ENCODE measurements at regions of chr4 and their contacts with region 1.

Region 1: DNA sequence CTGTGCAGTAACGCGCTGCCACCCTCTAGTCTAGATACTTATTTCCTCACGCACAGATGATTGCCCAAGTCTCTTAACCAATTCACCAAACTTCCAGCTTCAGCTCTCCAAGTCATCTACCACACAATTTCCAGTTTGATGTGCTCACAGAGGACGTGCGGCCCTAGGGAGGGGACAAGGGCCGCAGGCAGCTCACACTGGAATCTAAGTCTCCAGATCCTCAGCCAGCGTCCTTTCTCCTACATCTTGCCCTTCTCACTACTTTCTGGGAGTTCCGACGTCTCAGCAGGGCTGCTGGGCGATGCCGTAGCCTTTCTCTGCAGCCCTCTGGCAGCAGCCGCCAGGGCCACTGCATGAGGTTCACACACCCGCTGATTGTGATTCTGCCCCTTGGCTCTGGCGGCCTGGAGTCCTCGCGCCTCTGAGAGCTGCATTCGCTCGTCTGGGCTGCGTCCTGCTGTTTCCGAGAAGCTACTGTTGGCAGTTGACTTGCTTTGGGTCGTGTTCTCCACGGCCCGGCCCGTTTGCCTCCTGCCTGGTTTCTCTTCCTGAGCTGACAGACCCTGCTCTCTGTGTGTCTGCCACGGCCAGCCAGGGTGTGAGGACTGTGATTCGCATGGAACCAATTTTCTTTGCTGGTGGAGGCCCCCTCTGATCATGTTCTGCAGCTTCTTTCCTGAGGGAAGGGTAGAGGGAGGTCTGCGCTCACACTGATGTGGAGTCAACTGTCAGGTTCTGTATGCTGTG is 14.1 kb upstream of the TMEM131L start:
- DNase-seq: no peak
- H3K4me3 Mint-ChIP-seq: no peak overlapping the region
- H3K27ac Mint-ChIP-seq: no peak overlapping the region
- H3K4me1 Mint-ChIP-seq: peaks cover 11% of the 10 kb centered on the region
- H3K27me3 Mint-ChIP-seq: no peaks in the 10 kb centered on the region

Region 2: GRCh38 chr4:153159728-153160221 is 292.3 kb before region 1 on chr4:
- intact Hi-C with region 1: no loop called
- DNase-seq: no peak
- H3K4me3 Mint-ChIP-seq: no peak overlapping the region
- H3K27ac Mint-ChIP-seq: peak overlapping the region; percentile 19
- H3K4me1 Mint-ChIP-seq: peaks cover 28% of the 10 kb centered on the region
- H3K27me3 Mint-ChIP-seq: peaks cover 27% of the 10 kb centered on the region

Region 3: DNA sequence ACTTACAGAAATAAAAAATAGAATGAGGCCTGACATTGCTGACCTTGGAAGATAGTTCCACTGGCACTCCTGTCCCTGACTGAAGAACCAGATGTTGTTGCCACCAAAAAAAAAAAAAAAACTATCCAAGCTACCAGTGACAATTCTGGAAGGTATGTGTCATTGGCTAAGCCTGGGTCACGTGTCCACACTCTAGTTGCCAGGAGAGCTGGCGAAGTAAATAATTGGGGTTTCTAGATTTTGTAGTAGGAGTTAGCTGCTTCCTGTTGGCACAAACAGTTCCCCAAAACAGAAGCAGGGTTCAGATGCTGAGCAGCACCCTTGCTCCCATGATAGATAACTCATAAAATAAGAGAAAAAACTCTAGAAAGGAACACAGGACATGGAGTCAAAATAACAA is 87.1 kb before region 1 on chr4:
- intact Hi-C with region 1: no loop called
- DNase-seq: no peak
- H3K4me3 Mint-ChIP-seq: no peak overlapping the region
- H3K27ac Mint-ChIP-seq: no peak overlapping the region
- H3K4me1 Mint-ChIP-seq: peaks cover 12% of the 10 kb centered on the region
- H3K27me3 Mint-ChIP-seq: no peaks in the 10 kb centered on the region

Region 4: GRCh38 chr4:153466081-153466948 is 14.2 kb after region 1 on chr4 and contains the start of gene TMEM131L:
- intact Hi-C with region 1: loop called (anchors 2 kb)
- DNase-seq: peak; percentile 66
- H3K4me3 Mint-ChIP-seq: peak within 1 kb of the TSS; percentile 82
- H3K27ac Mint-ChIP-seq: peak within 1 kb of the TSS; percentile 82
- H3K4me1 Mint-ChIP-seq: peaks cover 53% of the 10 kb centered on the region
- H3K27me3 Mint-ChIP-seq: no peaks in the 10 kb centered on the region
- total RNA-seq, gene TMEM131L: 28.1 and 29.7 TPM in 2 replicates

Measured in activated T-helper 2 cell treated with anti-CD3 and anti-CD28 coated beads, Interferon-gamma antibody, Interleukin-2, Interleukin-4, amounts not matched to agents 10 μg/mL and 5 μg/mL and 100 μg/mL, durations not matched to agents 14 hours and 24 hours and 36 hours (primary cell).